Mammary epithelial cell (primary cell): ENCODE measurements at regions of chr10 and their contacts with region 1.

Region 1: GRCh38 chr10:70619271-70620019 is 16.9 kb upstream of the PRF1 start:
- DNase-seq: peak; percentile 44
- H3K4me3 ChIP-seq: no peak overlapping the region
- H3K27ac ChIP-seq: no peak overlapping the region
- H3K4me1 ChIP-seq: no peaks in the 10 kb centered on the region
- H3K27me3 ChIP-seq: peaks cover 4% of the 10 kb centered on the region
- CTCF ChIP-seq: peak; percentile 41 to 50

Region 2: DNA sequence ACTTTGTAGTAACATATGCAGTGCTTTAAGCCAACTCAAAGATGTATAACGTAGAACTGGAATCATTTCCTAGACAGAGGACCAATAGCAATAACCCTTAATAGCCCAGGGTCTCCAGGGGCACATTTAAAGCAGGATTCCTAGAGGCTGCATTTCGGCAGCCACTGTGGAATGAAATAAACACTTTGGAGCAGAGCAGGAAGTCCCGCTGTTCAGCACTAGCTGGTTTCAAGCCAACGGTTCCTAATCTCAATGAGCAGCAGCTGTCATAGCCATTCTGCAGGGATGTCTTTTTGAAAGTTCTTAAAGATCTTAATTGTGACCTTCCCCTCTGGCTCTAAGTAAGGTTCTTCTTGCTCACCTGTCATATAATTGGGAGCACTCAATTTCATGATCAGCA is 585.2 kb before region 1 on chr10:
- CTCF ChIA-PET with region 1: no interaction called
- dilution Hi-C with region 1: no loop called
- in situ Hi-C with region 1: no loop called
- intact Hi-C with region 1: no loop called
- DNase-seq: no peak
- H3K4me3 ChIP-seq: no peak overlapping the region
- H3K27ac ChIP-seq: no peak overlapping the region
- H3K4me1 ChIP-seq: no peaks in the 10 kb centered on the region
- H3K27me3 ChIP-seq: peaks cover 5% of the 10 kb centered on the region
- CTCF ChIP-seq: no peak

Region 3: DNA sequence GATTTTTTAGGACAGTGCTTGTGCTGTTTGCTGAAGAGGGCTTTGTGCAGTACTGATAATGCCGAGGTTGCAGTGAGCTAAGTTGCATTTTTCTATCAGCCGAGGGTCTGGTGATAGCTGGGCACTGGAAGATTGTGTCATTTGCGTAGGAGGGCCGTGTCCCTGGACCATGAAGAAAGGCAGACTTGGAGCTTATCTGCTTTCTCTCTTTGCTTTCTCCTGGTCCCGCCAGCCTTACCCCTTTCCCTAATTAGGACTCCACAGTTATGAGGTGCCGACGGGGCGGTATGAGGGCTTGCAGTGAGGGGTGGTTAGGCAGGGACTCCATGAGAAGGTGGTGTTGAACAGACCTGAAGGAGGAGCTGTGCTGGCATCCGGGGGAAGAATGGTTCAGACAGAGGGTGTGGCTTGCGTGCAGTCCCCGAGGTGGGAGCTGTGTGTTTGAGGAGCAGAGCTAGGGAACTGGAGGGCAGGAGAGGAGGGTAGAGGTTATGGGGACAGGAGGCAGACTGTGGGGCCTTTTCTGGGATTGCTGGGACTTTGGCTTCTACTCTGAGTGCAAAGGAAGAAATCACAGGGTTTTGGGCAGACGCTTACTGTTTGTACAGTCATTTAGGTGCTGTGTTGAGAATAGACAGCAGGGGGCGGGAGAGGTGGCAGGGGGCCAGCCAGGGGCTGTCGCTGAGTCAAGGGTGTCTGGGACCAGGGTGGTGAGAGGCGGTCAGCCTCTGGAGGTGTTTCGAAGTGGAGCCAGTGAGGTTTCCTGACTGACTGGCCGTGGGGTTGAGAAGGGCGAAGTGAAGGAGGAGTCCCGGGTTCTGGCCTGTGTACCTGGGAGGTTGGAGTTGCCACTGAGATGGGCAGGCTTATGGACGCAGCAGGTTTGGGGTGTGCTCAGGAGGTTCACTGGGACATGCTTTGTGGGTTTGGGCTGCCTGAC is 60.3 kb before region 1 on chr10:
- CTCF ChIA-PET with region 1: no interaction called
- dilution Hi-C with region 1: no loop called
- in situ Hi-C with region 1: no loop called
- intact Hi-C with region 1: loop called (anchors 2 kb)
- DNase-seq: peak; percentile 42
- H3K4me3 ChIP-seq: no peak overlapping the region
- H3K27ac ChIP-seq: no peak overlapping the region
- H3K4me1 ChIP-seq: no peaks in the 10 kb centered on the region
- H3K27me3 ChIP-seq: peaks cover 3% of the 10 kb centered on the region
- CTCF ChIP-seq: peak; percentile 47 to 60

Region 4: GRCh38 chr10:70672165-70673042 is 53.0 kb after region 1 on chr10 and contains the start of gene ADAMTS14:
- CTCF ChIA-PET with region 1: no interaction called
- dilution Hi-C with region 1: no loop called
- in situ Hi-C with region 1: no loop called
- intact Hi-C with region 1: loop called (anchors 2 kb)
- DNase-seq: no peak
- H3K4me3 ChIP-seq: peak within 1 kb of the TSS in 2 of 3 experiments; percentile 26 to 30
- H3K27ac ChIP-seq: no peak within 1 kb of the TSS
- H3K4me1 ChIP-seq: peaks cover 11% of the 10 kb centered on the region
- H3K27me3 ChIP-seq: peaks cover 14% of the 10 kb centered on the region
- CTCF ChIP-seq: no peak
- total RNA-seq, gene ADAMTS14: 0.35 to 0.50 TPM